ENCODE measurements at regions of chr10 and their contacts with region 1.

Region 1: GRCh38 chr10:112949875-112950507 is at the start of gene TCF7L2:
- DNase-seq: peak; percentile 94 to 98 (median 96)
- ATAC-seq: peak; percentile 85
- H3K4me3 ChIP-seq: peak within 1 kb of the TSS; percentile 38
- H3K4me1 ChIP-seq: peaks cover 29% of the 10 kb centered on the region
- CTCF ChIP-seq: no peak
- total RNA-seq, gene TCF7L2: 99.6 to 182 (median 102) TPM

Region 2: DNA sequence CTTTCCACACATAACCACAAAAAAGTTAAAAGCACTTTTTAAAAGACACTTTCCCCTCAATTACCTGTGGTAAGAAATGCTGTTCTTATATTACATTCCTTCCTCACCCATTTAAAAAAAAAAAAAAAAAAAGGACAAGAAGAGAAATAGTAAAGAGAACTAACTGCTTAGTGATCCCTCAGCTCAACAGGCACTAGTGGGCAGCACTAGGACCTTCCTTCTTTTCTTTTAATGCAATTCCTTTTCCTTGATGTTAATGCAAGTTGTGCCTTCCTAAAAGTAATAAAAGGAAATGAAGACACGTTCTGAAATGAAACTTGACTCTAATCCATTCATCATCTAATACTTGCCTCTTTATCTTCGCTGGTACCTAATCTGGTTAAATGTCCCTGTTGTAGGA is 189.7 kb after region 1 on chr10:
- intact Hi-C with region 1: loop called in 1 of 2 experiments (anchors 10 kb)
- DNase-seq: no peak
- ATAC-seq: no peak
- H3K4me3 ChIP-seq: no peak overlapping the region
- H3K4me1 ChIP-seq: no peaks in the 10 kb centered on the region
- CTCF ChIP-seq: no peak

Measured in mucosa of descending colon (tissue), 3 donors.